IMR-90 (cell line): ENCODE measurements at regions of chr1 and their contacts with region 1.

Region 1: DNA sequence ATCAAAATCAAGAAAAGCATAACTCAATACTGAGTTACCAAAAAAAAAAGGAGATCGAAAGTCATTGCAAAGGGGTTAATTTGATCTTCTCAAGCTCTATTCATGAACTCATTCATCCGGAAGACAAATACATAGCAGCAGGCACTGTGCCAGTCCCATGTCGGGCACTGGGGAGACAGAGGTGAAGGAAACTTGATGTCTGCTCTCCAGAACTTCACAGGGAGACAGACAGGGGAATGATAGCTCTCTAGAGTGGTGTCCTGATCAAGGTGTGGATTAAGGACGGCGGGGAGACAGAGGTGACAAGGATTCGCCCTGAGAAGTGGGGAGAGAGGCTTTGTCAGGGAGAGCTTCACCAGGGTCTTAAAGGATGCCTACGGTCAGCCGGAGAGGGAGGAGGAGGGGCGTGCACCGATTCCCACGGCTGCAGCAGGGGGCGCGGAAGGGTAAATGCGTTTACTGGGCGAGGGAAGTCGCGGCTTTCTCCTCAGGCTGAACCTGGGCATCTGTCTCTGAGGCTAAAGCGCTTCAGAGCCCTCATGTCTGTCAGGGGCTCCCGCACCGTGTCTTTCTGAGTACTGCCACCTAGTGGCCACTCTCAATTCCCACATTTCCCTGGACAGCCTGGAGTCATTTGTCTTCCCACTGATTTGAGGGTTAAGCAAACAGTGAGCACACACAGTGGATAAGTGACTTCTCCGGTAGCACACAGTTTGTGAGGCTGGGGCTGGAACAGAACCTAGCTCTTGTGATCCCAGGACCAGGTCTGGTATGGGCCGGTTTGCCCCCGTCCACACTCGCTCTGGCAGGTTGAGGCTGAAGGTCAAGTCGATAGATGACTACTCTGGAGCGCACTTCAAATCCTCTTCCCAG is 152.8 kb downstream of the TENT5C start:
- DNase-seq: peak; percentile 83
- ATAC-seq: peak; percentile 96
- H3K4me3 ChIP-seq: peak overlapping the region; percentile 37
- H3K27ac ChIP-seq: peak overlapping the region; percentile 27
- H3K4me1 ChIP-seq: peaks cover 10% of the 10 kb centered on the region
- H3K27me3 ChIP-seq: no peaks in the 10 kb centered on the region
- CTCF ChIP-seq: peak; percentile 85
- POLR2A ChIP-seq: no peak
- RAD21 ChIP-seq: peak; percentile 79

Region 2: DNA sequence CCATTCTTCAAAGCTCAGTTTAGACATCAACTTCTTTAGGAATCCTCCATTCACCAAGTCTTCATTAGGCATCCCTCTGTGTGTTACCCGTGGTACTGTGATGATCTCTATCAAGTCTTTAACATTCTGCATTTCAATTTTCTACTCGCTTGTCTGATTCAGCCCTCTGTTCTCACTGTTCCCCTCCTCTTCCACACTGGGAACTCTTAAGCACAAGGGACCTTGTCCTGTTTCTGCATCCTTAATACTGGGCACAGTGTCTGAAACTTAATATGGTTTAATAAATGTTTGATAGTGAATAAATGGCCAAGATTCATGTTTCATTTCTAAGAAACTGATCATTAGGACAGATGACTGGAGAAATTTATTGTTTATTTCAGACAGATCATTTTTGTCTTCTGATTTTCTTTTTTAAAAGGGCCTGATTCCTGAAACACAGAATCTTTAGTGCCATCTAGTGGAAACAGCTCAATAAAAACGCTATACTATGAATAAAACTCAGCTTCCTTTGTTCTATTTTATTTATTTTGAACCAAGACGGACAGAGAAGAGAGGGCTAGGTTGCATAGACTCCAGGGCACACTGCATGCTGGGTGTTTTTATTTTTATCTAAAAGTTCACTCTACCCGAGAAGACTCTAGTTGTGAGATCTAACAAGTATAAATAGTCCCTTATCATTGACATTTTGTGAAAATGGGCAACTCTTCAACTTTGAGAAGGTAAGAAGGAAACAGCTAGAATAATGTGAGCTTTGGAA is 630.2 kb before region 1 on chr1:
- CTCF ChIA-PET with region 1: no interaction called
- POLR2A ChIA-PET with region 1: no interaction called
- dilution Hi-C with region 1: no loop called
- in situ Hi-C with region 1: no loop called
- intact Hi-C with region 1: loop called (anchors 5 kb)
- DNase-seq: peak; percentile 69
- ATAC-seq: peak; percentile 84
- H3K4me3 ChIP-seq: no peak overlapping the region
- H3K27ac ChIP-seq: no peak overlapping the region
- H3K4me1 ChIP-seq: 0 out of 2 replicates have a peak, but pooled peaks cover 2% of the 10 kb centered on the region
- H3K27me3 ChIP-seq: peaks cover 3% of the 10 kb centered on the region
- CTCF ChIP-seq: peak; percentile 67
- POLR2A ChIP-seq: no peak
- RAD21 ChIP-seq: peak; percentile 67

Region 3: DNA sequence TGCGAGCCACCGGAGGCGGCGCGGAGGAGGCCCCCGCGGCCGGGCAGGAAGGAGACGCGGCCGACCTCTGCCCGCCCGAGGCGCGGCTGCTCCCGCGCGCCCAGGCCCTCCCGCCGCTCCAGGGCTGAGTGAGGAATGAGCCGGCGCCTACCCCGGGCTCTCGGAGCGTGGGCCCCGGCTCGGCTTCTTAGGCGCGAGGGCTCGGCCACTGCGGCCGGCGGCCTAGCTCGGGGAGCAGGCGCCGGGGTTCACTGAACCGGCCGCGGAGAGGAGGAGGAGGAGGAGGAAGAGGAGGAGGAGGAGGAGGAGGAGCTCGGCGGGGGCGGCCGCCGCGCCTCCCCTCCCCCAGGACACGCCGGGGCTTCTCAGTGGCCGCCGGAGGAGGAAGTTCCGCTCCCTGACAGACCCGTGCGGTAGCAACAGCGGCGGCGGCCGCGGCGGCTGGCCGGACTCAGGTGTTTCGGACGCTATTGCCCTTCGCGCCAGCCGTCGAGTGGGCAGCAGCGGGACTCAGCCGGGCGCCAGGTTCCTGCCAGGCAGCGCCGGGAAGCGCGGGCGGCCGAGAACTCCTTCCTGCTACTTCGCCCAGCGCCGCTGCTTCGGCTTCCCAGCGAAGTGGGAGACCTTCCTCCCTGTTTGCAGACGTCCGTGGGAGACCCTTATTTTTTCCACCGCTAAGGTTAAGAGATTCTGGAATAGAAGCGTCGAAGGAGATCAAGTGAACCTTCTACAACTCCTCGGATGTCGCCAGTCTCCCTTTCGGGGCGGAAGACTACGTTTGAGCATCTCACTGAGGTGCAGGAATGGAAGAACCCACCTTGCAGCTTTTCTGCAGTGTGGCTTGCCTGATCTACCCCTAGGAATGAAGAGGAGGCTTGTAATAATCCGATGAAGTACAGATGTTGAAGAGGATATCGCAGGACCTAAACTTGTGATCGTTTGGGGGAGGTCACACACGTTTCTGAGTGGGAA is 391.3 kb before region 1 on chr1 and contains the start of gene MAN1A2:
- CTCF ChIA-PET with region 1: no interaction called
- POLR2A ChIA-PET with region 1: no interaction called
- dilution Hi-C with region 1: no loop called
- in situ Hi-C with region 1: loop called (anchors 25 kb)
- intact Hi-C with region 1: loop called (anchors 10 kb)
- DNase-seq: peak; percentile 69
- ATAC-seq: peak; percentile 83
- H3K4me3 ChIP-seq: peak within 1 kb of the TSS; percentile 90
- H3K27ac ChIP-seq: peak within 1 kb of the TSS; percentile 97
- H3K4me1 ChIP-seq: peaks cover 6% of the 10 kb centered on the region
- H3K27me3 ChIP-seq: no peaks in the 10 kb centered on the region
- CTCF ChIP-seq: no peak
- POLR2A ChIP-seq: no peak
- RAD21 ChIP-seq: no peak
- total RNA-seq, gene MAN1A2: 29.4 and 60.8 TPM in 2 replicates

Region 4: DNA sequence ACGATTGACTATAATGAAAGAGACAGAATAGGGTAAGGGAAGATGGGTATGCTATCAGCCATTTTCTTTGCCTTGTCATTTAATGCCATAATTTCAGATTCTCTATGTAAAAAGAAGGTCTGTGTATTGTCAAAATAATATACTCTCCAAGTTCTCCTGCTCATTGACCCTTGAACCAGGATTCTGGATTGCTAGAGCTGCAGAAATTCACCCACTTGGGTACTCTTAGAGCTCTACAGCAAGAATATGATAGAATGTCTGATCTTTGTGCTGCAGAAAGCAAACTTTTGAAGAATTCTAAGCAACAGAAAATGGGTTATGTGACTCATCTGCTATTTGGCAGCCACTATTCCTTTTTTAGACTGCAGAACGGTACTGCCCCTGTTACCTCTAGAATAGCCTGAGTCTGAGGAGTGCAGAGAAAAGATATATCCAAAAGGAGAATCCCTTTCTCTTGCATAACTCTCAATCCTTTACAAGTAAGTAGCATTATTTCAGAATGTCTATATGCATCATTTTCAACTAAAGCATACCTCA is 231.0 kb before region 1 on chr1:
- CTCF ChIA-PET with region 1: interaction called, 6 read pairs
- POLR2A ChIA-PET with region 1: no interaction called
- dilution Hi-C with region 1: no loop called
- in situ Hi-C with region 1: loop called (anchors 5 kb)
- intact Hi-C with region 1: no loop called
- DNase-seq: peak; percentile 66
- ATAC-seq: peak; percentile 85
- H3K4me3 ChIP-seq: no peak overlapping the region
- H3K27ac ChIP-seq: no peak overlapping the region
- H3K4me1 ChIP-seq: no peaks in the 10 kb centered on the region
- H3K27me3 ChIP-seq: no peaks in the 10 kb centered on the region
- CTCF ChIP-seq: no peak
- POLR2A ChIP-seq: no peak
- RAD21 ChIP-seq: no peak

Region 5: GRCh38 chr1:117586747-117587498 is 171.8 kb before region 1 on chr1:
- CTCF ChIA-PET with region 1: interaction called, 10 read pairs
- POLR2A ChIA-PET with region 1: no interaction called
- dilution Hi-C with region 1: no loop called
- in situ Hi-C with region 1: no loop called
- intact Hi-C with region 1: no loop called
- DNase-seq: no peak
- ATAC-seq: no peak
- H3K4me3 ChIP-seq: no peak overlapping the region
- H3K27ac ChIP-seq: no peak overlapping the region
- H3K4me1 ChIP-seq: no peaks in the 10 kb centered on the region
- H3K27me3 ChIP-seq: peaks cover 7% of the 10 kb centered on the region
- CTCF ChIP-seq: no peak
- POLR2A ChIP-seq: no peak
- RAD21 ChIP-seq: no peak

Region 6: DNA sequence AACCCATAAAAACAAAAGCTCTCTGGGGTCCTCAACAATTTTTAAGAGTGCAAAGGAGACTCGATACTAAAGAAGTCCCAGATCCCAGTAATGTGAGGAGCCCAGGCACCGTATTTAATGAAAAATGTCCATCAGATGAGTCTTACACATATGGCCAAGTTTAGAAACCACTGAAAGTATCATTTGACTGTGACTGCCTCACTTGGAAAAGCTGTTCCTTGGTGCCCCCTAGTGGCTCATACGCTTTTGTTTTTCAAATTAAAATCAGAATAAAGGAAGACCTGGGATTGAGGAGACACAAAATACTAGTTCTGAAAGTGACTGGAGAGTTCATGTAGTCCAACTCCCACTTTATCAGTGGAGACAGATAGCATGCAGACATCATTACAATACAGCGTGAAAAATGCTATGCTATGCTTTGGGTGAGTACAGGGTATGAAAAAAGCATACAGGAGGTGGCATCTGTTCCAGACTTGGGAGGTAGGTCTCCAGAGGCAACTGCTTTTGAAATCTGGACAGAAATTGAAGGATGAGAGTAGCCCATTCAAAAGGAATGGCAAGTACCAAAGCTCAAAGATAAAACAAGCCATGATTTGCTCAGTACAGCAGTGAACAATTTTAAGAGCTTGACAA is 136.9 kb after region 1 on chr1:
- CTCF ChIA-PET with region 1: interaction called, 9 read pairs
- POLR2A ChIA-PET with region 1: interaction called, 3 read pairs
- dilution Hi-C with region 1: no loop called
- in situ Hi-C with region 1: loop called (anchors 25 kb)
- intact Hi-C with region 1: loop called (anchors 1 kb)
- DNase-seq: peak; percentile 92
- ATAC-seq: peak; percentile 89
- H3K4me3 ChIP-seq: no peak overlapping the region
- H3K27ac ChIP-seq: no peak overlapping the region
- H3K4me1 ChIP-seq: peaks cover 2% of the 10 kb centered on the region; the same call in 1 of the 2 replicates
- H3K27me3 ChIP-seq: no peaks in the 10 kb centered on the region
- CTCF ChIP-seq: peak; percentile 94
- POLR2A ChIP-seq: no peak; the same call in 1 of the 2 replicates
- RAD21 ChIP-seq: peak; percentile 97